Sigmoid colon (tissue), 7 donors: ENCODE measurements at regions of chr9 and their contacts with region 1.

Region 1: DNA sequence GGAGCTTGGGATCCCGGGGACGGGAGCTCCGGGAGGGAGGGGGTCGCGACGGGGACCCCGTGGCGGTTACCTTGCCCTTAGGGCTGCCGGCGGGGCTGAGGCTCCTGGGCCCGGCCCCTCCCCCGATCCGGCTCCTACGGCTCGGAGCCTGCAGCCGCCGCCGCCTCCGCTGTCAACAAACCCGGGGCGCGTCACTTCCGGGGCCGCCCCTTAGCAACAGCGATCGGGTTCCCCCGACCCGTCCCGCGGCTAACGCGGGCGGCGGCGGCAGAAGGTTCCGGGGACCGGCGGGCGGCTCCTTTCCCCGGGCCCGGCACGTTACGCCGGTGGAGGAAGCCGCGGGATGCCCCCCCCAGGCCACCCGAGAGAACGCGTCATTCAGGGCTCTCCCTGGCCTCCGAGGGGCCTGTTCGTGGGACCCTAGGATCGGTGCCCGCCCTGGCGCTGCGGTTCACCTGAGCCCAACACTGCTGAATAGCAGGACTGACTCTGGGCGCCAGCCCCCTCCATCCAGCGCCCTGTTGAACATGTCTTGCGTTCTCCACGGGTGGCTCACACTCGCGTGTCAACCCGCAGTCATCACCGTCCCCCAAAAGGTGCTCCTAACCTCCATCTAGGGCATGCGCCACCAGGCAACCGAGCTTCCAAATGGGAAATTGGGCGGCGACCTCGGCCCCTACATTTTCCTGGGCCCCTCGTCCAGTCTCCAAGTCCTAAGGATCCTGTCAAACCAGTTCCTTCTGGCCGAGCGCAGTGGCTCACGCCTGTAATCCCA is at the start of gene ZER1:
- DNase-seq: peak; percentile 96
- H3K4me3 ChIP-seq: peak within 1 kb of the TSS; percentile 95 to 99 (median 98)
- H3K27ac ChIP-seq: peak within 1 kb of the TSS; percentile 83 to 96 (median 91)
- H3K4me1 ChIP-seq: peaks cover 0 to 31% (median 19%) of the 10 kb centered on the region in 4 donors
- H3K27me3 ChIP-seq: no peaks in the 10 kb centered on the region
- CTCF ChIP-seq: no peak
- EP300 ChIP-seq: peak in 2 of 4 donors; percentile 16 to 23
- POLR2A ChIP-seq: peak; percentile 57 to 80
- total RNA-seq, gene ZER1: 41.6 to 65.4 (median 51.9) TPM

Region 2: DNA sequence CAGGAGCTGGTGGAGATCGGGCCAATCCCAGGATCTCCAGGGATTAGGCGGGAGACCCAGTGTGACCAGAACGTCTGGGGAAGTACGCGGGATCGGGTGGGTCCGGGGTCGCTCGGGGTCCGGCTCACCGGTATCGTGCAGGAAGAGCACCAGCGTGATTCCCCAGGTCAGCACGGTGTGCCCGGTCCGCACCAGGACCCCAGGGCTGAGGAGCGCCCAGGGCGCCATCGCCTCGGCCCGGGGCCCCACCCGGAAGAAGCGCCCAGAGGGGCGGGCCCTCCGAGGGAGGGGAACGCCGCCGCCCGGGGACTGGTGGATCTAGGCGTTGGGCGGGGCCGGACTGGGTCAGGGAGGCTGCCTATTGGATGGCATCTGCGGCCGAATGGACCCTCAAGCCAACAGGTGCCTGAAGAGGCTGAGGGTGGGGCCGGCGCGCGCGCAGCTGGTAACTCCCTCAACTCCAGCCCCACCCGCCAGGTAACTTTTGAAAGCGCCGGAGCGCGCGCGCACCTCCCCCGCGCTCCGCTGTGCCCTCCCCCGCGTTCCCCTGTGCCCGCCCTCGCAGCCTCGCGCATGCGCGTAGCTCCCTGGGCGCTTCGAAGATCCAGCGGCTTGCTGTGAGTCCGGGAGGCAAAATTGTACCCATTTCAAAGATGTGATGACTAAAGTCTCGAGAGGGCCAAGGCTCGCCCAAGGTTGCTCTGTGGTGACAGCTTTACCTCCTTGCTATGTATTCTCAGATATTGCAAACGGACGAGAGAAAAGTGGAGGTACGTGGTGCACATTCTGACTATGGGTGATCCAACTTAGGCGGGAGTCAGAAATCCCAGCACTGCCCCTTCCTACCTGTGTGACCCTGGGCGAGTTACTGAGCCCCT is 47.8 kb before region 1 on chr9 and contains the start of gene ZDHHC12:
- intact Hi-C with region 1: loop called (anchors 2 kb)
- DNase-seq: peak; percentile 98
- H3K4me3 ChIP-seq: peak within 1 kb of the TSS; percentile 40 to 74 (median 64)
- H3K27ac ChIP-seq: peak within 1 kb of the TSS; percentile 77 to 86 (median 82)
- H3K4me1 ChIP-seq: peaks cover 0 to 16% (median 10%) of the 10 kb centered on the region in 4 donors
- H3K27me3 ChIP-seq: no peaks in the 10 kb centered on the region
- CTCF ChIP-seq: no peak
- EP300 ChIP-seq: no peak
- POLR2A ChIP-seq: peak; percentile 37 to 92
- total RNA-seq, gene ZDHHC12: 13.3 to 46.2 (median 15.3) TPM

Region 3: DNA sequence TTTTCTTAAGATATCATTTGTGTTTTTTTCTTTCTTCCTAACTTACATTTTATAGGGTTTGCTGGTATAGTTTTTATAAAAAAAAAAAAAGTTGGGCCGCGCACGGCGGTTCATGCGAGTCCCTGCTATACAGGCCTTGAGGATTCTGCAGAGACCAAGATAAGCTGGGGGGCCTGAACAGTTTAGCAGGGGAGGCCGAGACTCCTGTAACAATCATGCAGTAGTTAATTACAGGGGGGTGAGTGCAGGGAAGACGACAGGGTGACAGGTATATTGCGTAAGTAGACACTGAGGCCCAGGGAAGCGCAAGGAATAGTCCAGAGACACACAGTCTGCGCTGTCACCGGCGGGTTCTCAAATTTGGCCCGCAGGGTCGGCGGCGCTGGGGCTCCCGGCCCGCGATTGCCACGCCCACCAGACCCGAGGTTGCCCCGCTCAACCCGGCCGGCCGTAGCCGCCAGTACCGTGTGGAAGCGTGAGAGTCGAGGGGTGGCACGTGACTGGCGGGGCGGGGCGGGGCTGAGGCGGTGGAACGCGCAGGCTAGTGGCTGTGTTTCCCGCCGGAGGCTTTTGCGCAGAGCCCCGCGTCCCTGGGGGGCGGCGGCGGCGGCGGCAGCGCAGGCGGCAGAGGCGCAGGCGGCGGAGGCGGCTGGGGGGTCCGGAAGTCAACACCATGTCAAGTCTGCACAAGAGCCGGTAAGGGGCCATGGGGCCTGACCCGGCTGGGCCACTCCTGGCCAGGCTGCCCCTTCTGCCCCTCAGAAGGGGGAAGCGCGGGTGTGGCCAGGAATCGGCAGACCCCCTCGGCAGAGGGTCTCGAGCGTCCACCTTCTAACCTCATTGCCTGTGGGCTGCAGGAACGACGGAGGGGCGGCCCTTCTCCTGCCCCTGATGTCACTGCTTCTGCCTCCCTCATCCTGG is 15.0 kb after region 1 on chr9 and contains the start of gene TBC1D13:
- intact Hi-C with region 1: loop called (anchors 1 kb)
- DNase-seq: peak; percentile 95
- H3K4me3 ChIP-seq: peak within 1 kb of the TSS; percentile 80 to 98 (median 92)
- H3K27ac ChIP-seq: peak within 1 kb of the TSS; percentile 79 to 86 (median 85)
- H3K4me1 ChIP-seq: peaks cover 0 to 27% (median 19%) of the 10 kb centered on the region in 4 donors
- H3K27me3 ChIP-seq: no peaks in the 10 kb centered on the region
- CTCF ChIP-seq: no peak
- EP300 ChIP-seq: peak in 2 of 4 donors; percentile 12 to 33
- POLR2A ChIP-seq: peak; percentile 18 to 31
- total RNA-seq, gene TBC1D13: 13.0 to 25.8 (median 17.8) TPM

Region 4: GRCh38 chr9:129235931-129236331 is 464.0 kb after region 1 on chr9:
- intact Hi-C with region 1: no loop called
- DNase-seq: no peak
- H3K4me3 ChIP-seq: no peak overlapping the region
- H3K27ac ChIP-seq: no peak overlapping the region
- H3K4me1 ChIP-seq: peaks cover 0 to 10% (median 9%) of the 10 kb centered on the region in 4 donors
- H3K27me3 ChIP-seq: no peaks in the 10 kb centered on the region
- CTCF ChIP-seq: no peak
- EP300 ChIP-seq: no peak
- POLR2A ChIP-seq: no peak